ENCODE measurements at regions of chr9 and their contacts with region 1.

Region 1: GRCh38 chr9:93302551-93303257 is 118.8 kb downstream of the WNK2 start:
- DNase-seq: peak; percentile 86
- CTCF ChIP-seq: peak; percentile 70

Region 2: DNA sequence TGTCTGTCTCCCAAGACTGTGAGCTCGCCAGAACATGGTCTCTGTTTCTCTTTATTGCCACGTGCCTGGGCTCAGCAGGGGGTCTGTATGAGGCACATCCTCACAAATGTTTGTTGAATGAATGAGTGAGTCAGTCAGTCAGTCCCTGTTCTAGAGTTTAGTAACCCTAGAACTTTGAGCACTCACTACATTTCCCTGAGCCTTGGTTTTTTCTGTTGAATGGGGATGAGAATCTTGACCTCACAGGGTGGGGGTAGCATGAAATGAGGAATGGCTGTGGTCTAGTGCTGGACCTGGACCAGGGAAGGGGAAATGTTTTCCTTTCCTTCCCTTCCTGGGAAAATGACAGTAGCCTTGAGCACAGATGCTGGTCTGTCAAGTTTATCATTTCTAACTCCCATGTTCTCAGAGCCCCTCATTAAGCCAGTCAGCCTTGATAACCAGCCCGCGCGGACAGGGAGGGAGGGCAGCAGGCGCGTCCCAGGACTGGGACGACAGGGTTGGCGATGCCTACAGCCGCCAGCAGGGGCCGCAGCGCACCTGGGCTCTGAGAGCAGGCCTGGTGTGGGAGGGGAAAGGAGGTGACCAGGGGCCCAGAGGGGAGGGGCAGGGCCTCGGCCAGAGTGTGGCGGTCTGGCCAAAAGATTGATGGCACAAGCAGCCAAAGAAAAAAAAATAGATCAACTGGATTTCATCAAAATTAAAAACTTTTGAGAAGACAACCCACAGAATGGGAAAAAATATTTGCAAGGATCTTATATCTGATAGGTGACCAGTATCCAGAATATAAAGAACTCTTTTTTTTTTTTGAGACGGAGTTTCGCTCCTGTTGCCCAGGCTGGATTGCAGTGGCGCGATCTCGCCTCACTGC is 142.9 kb before region 1 on chr9:
- in situ Hi-C with region 1: loop called (anchors 25 kb)
- DNase-seq: peak; percentile 91
- CTCF ChIP-seq: peak; percentile 100

Measured in GM13977 (cell line).